K562 (cell line): ENCODE measurements at regions of chrX and their contacts with region 1.

Region 1: DNA sequence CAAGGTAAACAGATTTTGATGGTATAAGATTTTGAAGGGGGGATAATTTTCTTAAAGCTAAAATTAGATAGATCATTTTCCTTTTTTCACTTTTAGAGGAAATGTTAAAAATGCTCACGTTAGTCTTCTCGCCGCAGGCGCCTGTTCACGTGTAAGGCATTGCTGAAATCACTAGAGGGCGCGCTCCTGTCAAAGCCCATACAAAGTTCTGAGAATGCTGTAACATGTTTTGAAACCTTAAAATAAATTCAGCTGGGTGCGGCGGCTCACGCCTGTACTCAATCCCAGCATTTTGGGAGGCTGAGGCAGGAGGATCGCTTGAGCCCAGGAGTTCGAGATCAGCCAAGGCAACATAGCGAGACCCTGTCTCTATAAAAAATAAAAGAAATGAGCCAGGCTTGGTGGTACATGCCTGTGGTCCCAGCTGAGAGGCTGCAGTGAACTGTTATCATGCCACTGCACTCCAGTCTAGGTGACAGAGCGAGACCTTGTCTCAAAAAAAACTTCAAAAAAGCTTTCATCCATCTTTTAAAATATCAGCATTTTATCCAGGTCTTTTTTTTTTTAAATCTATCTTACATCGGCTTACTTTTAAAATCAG is 138.0 kb downstream of the RBMX2 start:
- DNase-seq: peak; percentile 43 to 76 (median 46)
- ATAC-seq: peak; percentile 87
- H3K4me3 ChIP-seq: no peak overlapping the region
- H3K27ac ChIP-seq: no peak overlapping the region
- H3K4me1 ChIP-seq: no peaks in the 10 kb centered on the region; a peak in 1 of 5 replicates
- H3K27me3 ChIP-seq: peaks cover 0 to 6% of the 10 kb centered on the region in 2 experiments; a peak in 1 of 5 replicates
- CTCF ChIP-seq: peak; percentile 71 to 75 (median 73)
- EP300 ChIP-seq: no peak
- POLR2A ChIP-seq: no peak
- RAD21 ChIP-seq: peak; percentile 54 to 74

Region 2: GRCh38 chrX:130330706-130331105 is 209.1 kb before region 1 on chrX:
- CTCF ChIA-PET with region 1: interaction called, 3 read pairs
- POLR2A ChIA-PET with region 1: no interaction called
- in situ Hi-C with region 1: no loop called
- intact Hi-C with region 1: loop called (anchors 5 kb)
- DNase-seq: peak; percentile 47 to 78 (median 56)
- ATAC-seq: peak; percentile 98
- H3K4me3 ChIP-seq: no peak overlapping the region
- H3K27ac ChIP-seq: no peak overlapping the region
- H3K4me1 ChIP-seq: peaks cover 0 to 2% of the 10 kb centered on the region in 2 experiments; a peak in 2 of 5 replicates
- H3K27me3 ChIP-seq: no peaks in the 10 kb centered on the region
- CTCF ChIP-seq: peak; percentile 70 to 77 (median 74)
- EP300 ChIP-seq: no peak
- POLR2A ChIP-seq: no peak
- RAD21 ChIP-seq: peak; percentile 64 to 81

Region 3: GRCh38 chrX:130716781-130717413 is 177.1 kb after region 1 on chrX:
- CTCF ChIA-PET with region 1: no interaction called
- POLR2A ChIA-PET with region 1: no interaction called
- in situ Hi-C with region 1: no loop called
- intact Hi-C with region 1: no loop called
- DNase-seq: no peak
- ATAC-seq: no peak
- H3K4me3 ChIP-seq: no peak overlapping the region
- H3K27ac ChIP-seq: no peak overlapping the region
- H3K4me1 ChIP-seq: peaks cover 14 to 26% of the 10 kb centered on the region in 2 experiments
- H3K27me3 ChIP-seq: no peaks in the 10 kb centered on the region
- CTCF ChIP-seq: no peak
- EP300 ChIP-seq: no peak
- POLR2A ChIP-seq: no peak
- RAD21 ChIP-seq: no peak